ENCODE measurements at regions of chr9 and their contacts with region 1.

Region 1: DNA sequence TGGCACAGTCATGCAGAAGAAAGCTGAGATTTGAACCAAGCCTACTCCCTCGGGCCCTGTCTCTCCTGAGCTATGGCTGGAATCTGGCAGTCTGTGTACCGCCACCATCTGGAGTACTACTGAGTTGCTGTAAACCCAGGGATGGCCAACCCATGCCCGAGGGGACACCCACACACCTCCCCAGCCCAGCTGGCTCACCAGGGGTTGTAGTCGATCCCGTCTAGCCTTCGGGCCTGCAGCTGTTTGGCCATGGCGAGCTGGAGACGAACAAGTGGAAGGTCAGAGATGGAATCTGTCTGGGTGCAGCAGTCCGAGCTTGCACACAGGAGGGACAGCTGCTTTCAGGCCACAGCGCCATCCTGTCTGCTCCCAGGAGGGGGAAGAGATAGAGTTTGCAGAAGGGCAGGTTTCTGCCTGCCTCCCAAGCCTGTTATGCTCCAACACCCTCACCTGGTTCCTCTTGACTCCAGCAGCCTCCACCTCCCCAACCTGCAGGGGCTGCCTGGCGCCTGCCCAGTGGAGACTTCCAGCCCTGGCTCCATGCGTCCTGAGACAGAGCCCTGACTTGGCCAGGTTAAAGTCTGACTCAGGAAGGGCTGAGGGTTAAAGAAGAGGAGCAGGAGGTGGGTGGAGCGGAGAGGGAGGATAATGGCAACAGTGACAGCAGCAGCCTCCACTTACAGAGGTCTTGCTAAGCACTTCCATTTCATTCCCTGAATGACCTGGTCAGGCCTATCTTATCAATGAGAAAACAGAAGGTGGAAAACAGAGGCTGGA is 15.7 kb upstream of the SPOUT1 start:
- DNase-seq: peak; percentile 75
- H3K4me3 ChIP-seq: peak overlapping the region in 1 of 3 experiments; percentile 21
- H3K27ac ChIP-seq: no peak overlapping the region
- H3K4me1 ChIP-seq: peaks cover 18% of the 10 kb centered on the region
- H3K27me3 ChIP-seq: no peaks in the 10 kb centered on the region
- CTCF ChIP-seq: peak; percentile 44 to 70

Region 2: GRCh38 chr9:128733256-128733655 is 112.1 kb before region 1 on chr9:
- CTCF ChIA-PET with region 1: no interaction called
- dilution Hi-C with region 1: no loop called
- in situ Hi-C with region 1: no loop called
- intact Hi-C with region 1: loop called (anchors 10 kb)
- DNase-seq: peak; percentile 68
- H3K4me3 ChIP-seq: no peak overlapping the region
- H3K27ac ChIP-seq: no peak overlapping the region
- H3K4me1 ChIP-seq: no peaks in the 10 kb centered on the region
- H3K27me3 ChIP-seq: no peaks in the 10 kb centered on the region
- CTCF ChIP-seq: peak; percentile 74 to 82

Region 3: GRCh38 chr9:128742401-128742800 is 102.9 kb before region 1 on chr9:
- CTCF ChIA-PET with region 1: interaction called, 10 read pairs
- dilution Hi-C with region 1: no loop called
- in situ Hi-C with region 1: no loop called
- intact Hi-C with region 1: loop called (anchors 10 kb)
- DNase-seq: no peak
- H3K4me3 ChIP-seq: no peak overlapping the region
- H3K27ac ChIP-seq: no peak overlapping the region
- H3K4me1 ChIP-seq: no peaks in the 10 kb centered on the region
- H3K27me3 ChIP-seq: no peaks in the 10 kb centered on the region
- CTCF ChIP-seq: no peak

Region 4: GRCh38 chr9:128805661-128806060 is 39.7 kb before region 1 on chr9:
- CTCF ChIA-PET with region 1: no interaction called
- dilution Hi-C with region 1: no loop called
- in situ Hi-C with region 1: no loop called
- intact Hi-C with region 1: no loop called
- DNase-seq: no peak
- H3K4me3 ChIP-seq: no peak overlapping the region
- H3K27ac ChIP-seq: no peak overlapping the region
- H3K4me1 ChIP-seq: no peaks in the 10 kb centered on the region
- H3K27me3 ChIP-seq: no peaks in the 10 kb centered on the region
- CTCF ChIP-seq: no peak

Region 5: DNA sequence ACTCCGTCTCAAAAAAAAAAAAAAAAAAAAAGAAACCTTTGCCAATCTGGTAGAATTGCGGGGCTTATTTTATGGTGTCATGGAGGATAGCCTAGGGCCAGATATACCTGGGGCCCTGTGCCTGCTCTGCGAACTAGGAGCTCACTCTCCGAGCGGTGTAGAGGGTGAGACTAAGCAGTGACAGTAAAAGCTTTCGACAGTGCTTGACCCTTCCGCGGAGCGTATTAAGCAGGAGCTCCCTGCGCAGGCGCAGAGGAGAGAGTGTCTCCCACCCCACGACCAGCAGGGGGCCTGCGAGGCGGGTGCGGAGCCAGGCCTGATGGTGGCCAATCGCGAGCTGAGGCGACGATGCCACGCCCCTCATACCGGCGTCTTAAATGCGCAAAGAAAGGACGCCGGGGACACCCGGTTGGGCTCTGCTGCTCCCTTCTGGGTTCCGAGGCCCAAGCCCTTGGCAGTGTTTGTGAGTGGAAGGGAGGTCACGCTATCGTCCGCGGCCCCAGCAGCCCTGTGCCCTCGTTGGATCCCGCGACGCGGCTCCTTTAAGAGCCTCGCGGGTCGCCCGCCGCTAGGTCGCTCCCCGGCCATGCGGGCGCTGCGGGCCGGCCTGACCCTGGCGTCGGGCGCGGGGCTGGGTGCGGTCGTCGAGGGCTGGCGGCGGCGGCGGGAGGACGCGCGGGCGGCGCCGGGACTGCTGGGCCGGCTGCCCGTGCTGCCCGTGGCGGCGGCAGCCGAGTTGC is 27.1 kb before region 1 on chr9 and contains the start of gene ENDOG:
- CTCF ChIA-PET with region 1: interaction called, 8 read pairs
- dilution Hi-C with region 1: no loop called
- in situ Hi-C with region 1: no loop called
- intact Hi-C with region 1: loop called (anchors 1 kb)
- DNase-seq: peak; percentile 93
- H3K4me3 ChIP-seq: peak within 1 kb of the TSS; percentile 75 to 80 (median 76)
- H3K27ac ChIP-seq: peak within 1 kb of the TSS; percentile 41
- H3K4me1 ChIP-seq: peaks cover 16% of the 10 kb centered on the region
- H3K27me3 ChIP-seq: no peaks in the 10 kb centered on the region
- CTCF ChIP-seq: peak; percentile 96 to 99
- total RNA-seq, gene ENDOG: 30.8 to 40.3 TPM

Region 6: DNA sequence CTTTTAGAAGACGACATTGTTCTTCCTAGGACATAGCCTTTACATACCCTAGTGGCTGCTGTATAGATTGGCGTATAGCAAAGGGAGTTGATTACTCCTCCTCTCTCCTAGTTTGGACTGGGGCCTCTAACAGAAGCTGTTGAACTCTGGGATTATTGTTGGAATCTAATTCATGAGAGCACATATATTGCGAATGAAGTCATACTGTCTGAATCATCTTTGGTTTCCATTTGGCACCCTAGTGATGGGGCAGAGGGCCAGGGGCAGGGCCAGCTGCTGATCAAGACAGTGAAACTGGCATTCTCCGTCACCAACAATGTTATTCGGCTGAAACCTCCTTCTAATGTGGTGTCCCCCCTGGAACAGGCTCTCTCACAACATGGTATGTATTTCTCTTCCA is 142.5 kb after region 1 on chr9:
- CTCF ChIA-PET with region 1: no interaction called
- dilution Hi-C with region 1: no loop called
- in situ Hi-C with region 1: no loop called
- intact Hi-C with region 1: loop called (anchors 5 kb)
- DNase-seq: peak; percentile 64
- H3K4me3 ChIP-seq: no peak overlapping the region
- H3K27ac ChIP-seq: peak overlapping the region; percentile 85
- H3K4me1 ChIP-seq: peaks cover 10% of the 10 kb centered on the region
- H3K27me3 ChIP-seq: no peaks in the 10 kb centered on the region
- CTCF ChIP-seq: no peak

Region 7: DNA sequence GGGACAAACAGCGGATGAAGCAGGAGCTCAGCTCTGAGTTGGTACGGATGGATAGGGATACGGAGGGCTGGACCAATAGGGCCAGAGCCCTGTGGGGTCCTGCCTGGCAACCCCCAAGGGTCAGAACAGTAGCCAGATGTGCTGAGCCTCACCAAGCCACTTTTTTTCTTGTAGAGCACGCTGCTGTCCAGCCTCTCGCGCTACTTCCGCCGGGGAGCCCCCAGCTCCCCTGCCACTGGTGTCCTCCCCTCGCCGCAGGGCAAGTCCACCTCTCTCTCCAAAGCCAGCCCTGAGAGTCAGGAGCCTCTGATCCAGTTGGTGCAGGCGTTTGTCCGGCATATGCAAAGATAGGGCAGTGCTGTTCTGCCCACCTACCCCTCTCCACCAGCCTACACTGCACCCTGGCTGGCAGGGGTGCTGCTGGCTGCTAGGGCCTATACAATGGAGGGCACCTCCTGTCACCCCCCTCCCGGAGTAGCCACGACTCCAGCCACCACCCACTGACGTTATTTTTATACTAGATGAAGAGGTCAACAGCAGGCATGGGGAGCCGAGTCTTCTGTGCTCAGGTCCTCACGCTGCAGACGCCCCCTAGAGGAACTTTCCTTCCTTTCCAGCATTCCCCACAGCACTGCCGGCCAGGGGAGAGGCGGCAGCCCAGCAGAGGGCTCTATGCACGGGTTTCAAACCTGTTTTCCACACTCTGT is 161.1 kb after region 1 on chr9:
- CTCF ChIA-PET with region 1: no interaction called
- dilution Hi-C with region 1: no loop called
- in situ Hi-C with region 1: no loop called
- intact Hi-C with region 1: loop called (anchors 5 kb)
- DNase-seq: peak; percentile 50
- H3K4me3 ChIP-seq: no peak overlapping the region
- H3K27ac ChIP-seq: no peak overlapping the region
- H3K4me1 ChIP-seq: peaks cover 6% of the 10 kb centered on the region
- H3K27me3 ChIP-seq: no peaks in the 10 kb centered on the region
- CTCF ChIP-seq: peak; percentile 84 to 88

Measured in mammary epithelial cell (primary cell).